ENCODE measurements at regions of chr5 and their contacts with region 1.

Region 1: GRCh38 chr5:107887166-107887943 is 216.6 kb upstream of the EFNA5 start:
- DNase-seq: no peak
- H3K4me3 Mint-ChIP-seq: peak overlapping the region; percentile 28
- H3K27ac Mint-ChIP-seq: no peak overlapping the region
- H3K4me1 Mint-ChIP-seq: peaks cover 19% of the 10 kb centered on the region
- H3K27me3 Mint-ChIP-seq: no peaks in the 10 kb centered on the region

Region 2: GRCh38 chr5:107919969-107920368 is 32.6 kb after region 1 on chr5:
- CTCF ChIA-PET with region 1: no interaction called
- intact Hi-C with region 1: loop called (anchors 2 kb)
- DNase-seq: peak; percentile 29
- H3K4me3 Mint-ChIP-seq: no peak overlapping the region
- H3K27ac Mint-ChIP-seq: no peak overlapping the region
- H3K4me1 Mint-ChIP-seq: peaks cover 14% of the 10 kb centered on the region
- H3K27me3 Mint-ChIP-seq: no peaks in the 10 kb centered on the region